Dendritic cell treated with granulocyte-macrophage colony-stimulating factor and Interleukin-4, amounts not matched to agents 40 ng/mL and 50 ng/mL, for 4 days (primary cell): ENCODE measurements at regions of chr9 and their contacts with region 1.

Region 1: GRCh38 chr9:95875305-95876137 is at the start of gene ERCC6L2:
- H3K4me3 Mint-ChIP-seq: no peak within 1 kb of the TSS
- H3K27ac Mint-ChIP-seq: no peak within 1 kb of the TSS
- H3K4me1 Mint-ChIP-seq: peaks cover 10% of the 10 kb centered on the region
- H3K27me3 Mint-ChIP-seq: no peaks in the 10 kb centered on the region

Region 2: DNA sequence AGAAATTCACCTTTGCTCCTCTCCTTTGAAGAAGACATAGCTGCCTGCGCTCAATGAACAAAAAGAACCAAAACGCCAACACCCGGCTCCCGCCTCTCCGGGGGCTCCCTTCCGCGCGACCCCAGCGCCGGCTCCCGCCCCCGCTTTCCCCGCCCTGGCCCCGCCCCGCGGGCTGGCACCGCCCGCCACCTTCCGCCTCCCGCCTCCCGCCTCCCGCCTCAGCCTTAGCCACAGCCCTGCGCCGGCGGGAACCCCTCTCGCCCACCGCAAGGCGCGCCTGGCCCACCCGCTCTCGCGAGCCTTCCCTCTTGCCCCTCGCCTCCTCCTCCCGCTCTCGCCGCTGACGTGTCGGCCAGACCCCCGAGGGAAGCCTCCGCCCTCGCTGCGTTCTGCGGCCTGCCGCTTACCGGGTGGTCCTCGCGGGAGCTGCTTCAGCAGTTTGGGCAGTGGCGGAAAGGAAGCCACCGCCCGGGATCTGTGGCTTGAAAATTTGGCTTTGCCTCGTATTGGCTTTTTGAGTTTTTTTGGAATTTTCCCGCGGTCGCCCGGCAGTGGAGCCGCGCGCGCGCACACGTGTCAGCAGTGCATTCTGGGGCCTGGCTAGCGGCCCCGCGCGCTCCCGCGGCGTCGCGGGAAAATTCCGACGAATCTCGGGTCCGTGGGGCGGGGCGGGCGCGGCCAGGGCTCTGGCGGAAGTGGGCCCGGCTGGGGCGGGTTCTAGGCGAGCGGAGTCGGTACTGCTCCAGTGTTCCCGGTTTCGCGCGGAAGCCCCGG is 558.2 kb before region 1 on chr9 and contains the start of gene FANCC:
- intact Hi-C with region 1: loop called (anchors 10 kb)
- H3K4me3 Mint-ChIP-seq: peak within 1 kb of the TSS; percentile 92
- H3K27ac Mint-ChIP-seq: peak within 1 kb of the TSS; percentile 95
- H3K4me1 Mint-ChIP-seq: peaks cover 21% of the 10 kb centered on the region
- H3K27me3 Mint-ChIP-seq: peaks cover 26% of the 10 kb centered on the region

Region 3: DNA sequence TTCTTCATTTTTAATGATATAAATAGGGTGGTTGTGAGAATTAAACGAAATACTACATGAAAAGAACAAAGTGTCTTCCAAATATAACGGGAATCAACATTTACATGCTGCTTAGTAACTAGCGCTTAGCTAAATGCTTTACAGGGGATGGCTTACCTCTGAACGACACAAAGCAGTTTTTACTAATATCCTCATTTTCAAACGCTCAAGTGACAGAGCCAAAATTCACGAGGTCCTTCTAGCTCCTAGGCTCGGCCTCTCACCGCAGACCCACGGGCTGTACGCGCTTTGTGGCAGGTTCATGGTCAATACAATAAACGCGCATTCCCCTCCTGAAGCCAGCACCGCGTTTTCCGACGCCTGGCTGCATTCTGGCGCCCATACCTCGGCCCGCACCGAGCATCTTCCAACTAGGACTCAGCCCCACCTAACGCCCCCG is 901.9 kb after region 1 on chr9:
- intact Hi-C with region 1: loop called (anchors 10 kb)
- H3K4me3 Mint-ChIP-seq: peak overlapping the region; percentile 89
- H3K27ac Mint-ChIP-seq: peak overlapping the region; percentile 90
- H3K4me1 Mint-ChIP-seq: peaks cover 5% of the 10 kb centered on the region
- H3K27me3 Mint-ChIP-seq: no peaks in the 10 kb centered on the region